ENCODE measurements at regions of chr15 and their contacts with region 1.

Region 1: GRCh38 chr15:101723874-101724674 is at the start of gene TARS3:
- DNase-seq: peak; percentile 96 to 97 (median 97)
- ATAC-seq: peak; percentile 98 to 99 (median 99)
- H3K4me3 ChIP-seq: peak within 1 kb of the TSS; percentile 71 to 98 (median 83)
- H3K27ac ChIP-seq: peak within 1 kb of the TSS; percentile 62 to 94 (median 88)
- H3K4me1 ChIP-seq: peaks cover 0 to 16% (median 5%) of the 10 kb centered on the region in 12 donors
- H3K27me3 ChIP-seq: no peaks in the 10 kb centered on the region
- CTCF ChIP-seq: peak in 4 of 12 donors; percentile 12 to 30 (median 20)
- POLR2A ChIP-seq: peak; percentile 84 to 97
- total RNA-seq, gene TARS3: 19.4 to 44.3 (median 38.0) TPM

Region 2: DNA sequence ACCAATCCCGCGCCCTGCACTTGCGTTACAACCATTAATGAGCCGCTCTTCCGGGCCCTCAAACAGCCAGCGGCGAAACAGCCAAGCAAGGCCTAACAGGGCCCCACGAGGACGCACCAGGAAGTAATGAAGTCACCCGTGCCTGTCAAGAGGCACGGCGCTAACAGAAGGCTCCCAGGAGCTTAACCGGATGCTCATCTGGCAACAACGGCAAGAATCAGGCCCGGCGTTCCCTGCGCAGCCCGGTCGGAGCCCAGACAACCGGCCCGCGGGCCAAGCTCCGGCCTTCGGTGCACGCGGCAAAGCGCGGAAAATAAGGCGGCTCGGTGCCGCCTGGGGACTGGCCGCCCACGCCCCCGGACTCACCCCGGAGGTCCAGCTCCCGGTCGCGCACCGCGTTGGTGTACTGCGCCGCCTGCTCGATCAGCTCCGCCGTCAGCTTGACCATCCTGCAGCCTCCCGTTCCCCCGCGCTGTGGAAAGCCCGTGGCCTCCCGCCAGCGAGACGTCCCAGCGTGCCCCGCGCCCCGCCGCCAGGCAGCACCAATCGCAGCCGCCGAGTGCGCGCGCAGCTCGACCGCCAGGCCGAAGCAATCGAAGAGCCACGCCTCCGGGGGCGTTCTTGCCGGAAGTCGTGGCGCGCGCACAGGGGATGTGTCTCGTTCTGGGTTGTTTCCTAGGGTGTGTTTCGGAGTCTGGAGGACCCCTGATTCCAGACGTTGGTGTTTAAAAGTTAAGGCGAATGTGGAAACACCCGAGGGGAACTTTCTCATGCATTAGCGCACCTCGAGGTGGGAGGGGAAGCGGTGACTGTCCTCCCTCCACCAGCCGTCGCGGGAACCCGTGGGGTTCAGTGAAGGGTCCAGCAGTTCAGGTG is 429.1 kb before region 1 on chr15 and contains the start of gene SNRPA1:
- intact Hi-C with region 1: loop called in 1 of 10 experiments (anchors 10 kb)
- DNase-seq: peak; percentile 98 to 100 (median 99)
- ATAC-seq: peak; percentile 76 to 96 (median 92)
- H3K4me3 ChIP-seq: peak within 1 kb of the TSS; percentile 73 to 99 (median 93)
- H3K27ac ChIP-seq: peak within 1 kb of the TSS; percentile 85 to 98 (median 96)
- H3K4me1 ChIP-seq: peaks cover 4 to 36% (median 27%) of the 10 kb centered on the region in 12 donors
- H3K27me3 ChIP-seq: no peaks in the 10 kb centered on the region
- CTCF ChIP-seq: no peak
- POLR2A ChIP-seq: peak; percentile 29 to 76
- total RNA-seq, gene SNRPA1: 17.6 to 44.3 (median 28.6) TPM

Region 3: GRCh38 chr15:101652098-101652782 is 71.8 kb before region 1 on chr15 and contains the start of gene TM2D3:
- intact Hi-C with region 1: loop called in 2 of 10 experiments (anchors 5 to 10 kb)
- DNase-seq: peak; percentile 95 to 97 (median 96)
- ATAC-seq: peak; percentile 90 to 96 (median 95)
- H3K4me3 ChIP-seq: peak within 1 kb of the TSS; percentile 72 to 92 (median 87)
- H3K27ac ChIP-seq: peak within 1 kb of the TSS; percentile 91 to 100 (median 97)
- H3K4me1 ChIP-seq: peaks cover 0 to 40% (median 31%) of the 10 kb centered on the region in 12 donors
- H3K27me3 ChIP-seq: no peaks in the 10 kb centered on the region
- CTCF ChIP-seq: peak; percentile 75 to 95 (median 89)
- POLR2A ChIP-seq: peak; percentile 47 to 92
- total RNA-seq, gene TM2D3: 43.7 to 60.4 (median 49.5) TPM

Region 4: DNA sequence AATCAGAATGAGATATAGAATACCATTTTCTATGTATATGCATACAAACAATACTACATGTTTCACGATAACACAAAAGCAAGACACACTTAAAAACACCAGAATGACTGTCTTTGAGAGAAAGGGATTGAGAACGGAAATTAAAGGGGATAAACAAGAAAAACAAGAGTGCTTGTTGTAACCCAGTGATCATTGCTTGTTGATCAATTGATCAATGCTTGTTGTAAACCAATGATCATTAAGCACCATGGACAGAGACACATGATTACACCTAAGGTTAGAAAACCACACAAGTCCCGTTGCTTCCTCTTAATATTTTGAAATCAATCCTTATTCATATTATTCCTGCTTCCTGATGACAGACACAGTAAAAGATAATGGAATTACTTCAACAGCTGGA is 86.8 kb after region 1 on chr15:
- intact Hi-C with region 1: no loop called
- DNase-seq: no peak
- ATAC-seq: no peak
- H3K4me3 ChIP-seq: no peak overlapping the region
- H3K27ac ChIP-seq: no peak overlapping the region
- H3K4me1 ChIP-seq: no peaks in the 10 kb centered on the region
- H3K27me3 ChIP-seq: peaks cover 0 to 21% (median 3%) of the 10 kb centered on the region in 9 donors
- CTCF ChIP-seq: no peak
- POLR2A ChIP-seq: no peak